Mammary epithelial cell (primary cell): ENCODE measurements at regions of chr2 and their contacts with region 1.

Region 1: GRCh38 chr2:158753641-158754611 is 41.2 kb upstream of the DAPL1 start:
- DNase-seq: peak; percentile 46
- H3K4me3 ChIP-seq: no peak overlapping the region
- H3K27ac ChIP-seq: no peak overlapping the region
- H3K4me1 ChIP-seq: peaks cover 14% of the 10 kb centered on the region
- H3K27me3 ChIP-seq: no peaks in the 10 kb centered on the region
- CTCF ChIP-seq: peak; percentile 85

Region 2: DNA sequence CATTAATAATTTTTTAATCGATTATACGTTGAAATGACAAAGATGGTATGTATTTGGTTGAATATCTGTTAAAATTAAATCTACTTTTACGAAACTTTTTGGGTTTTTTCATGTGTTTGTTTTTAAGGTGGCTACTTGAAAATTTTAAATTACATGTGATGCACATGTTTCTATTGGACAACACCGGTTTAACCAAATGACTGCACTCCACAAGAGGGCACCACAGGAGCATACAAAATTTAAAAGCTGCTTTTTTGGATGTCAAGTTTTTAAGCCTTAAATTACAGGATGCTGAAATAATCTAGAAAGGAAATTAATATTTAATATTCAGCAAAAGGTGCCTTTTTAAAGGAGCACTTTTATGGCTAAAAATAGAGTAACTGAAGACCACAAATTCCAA is 976.5 kb before region 1 on chr2:
- CTCF ChIA-PET with region 1: no interaction called
- dilution Hi-C with region 1: no loop called
- in situ Hi-C with region 1: loop called in 1 of 2 experiments (anchors 25 kb)
- intact Hi-C with region 1: loop called (anchors 5 kb)
- DNase-seq: peak; percentile 28
- H3K4me3 ChIP-seq: no peak overlapping the region
- H3K27ac ChIP-seq: no peak overlapping the region
- H3K4me1 ChIP-seq: no peaks in the 10 kb centered on the region
- H3K27me3 ChIP-seq: no peaks in the 10 kb centered on the region
- CTCF ChIP-seq: peak; percentile 60 to 66

Region 3: DNA sequence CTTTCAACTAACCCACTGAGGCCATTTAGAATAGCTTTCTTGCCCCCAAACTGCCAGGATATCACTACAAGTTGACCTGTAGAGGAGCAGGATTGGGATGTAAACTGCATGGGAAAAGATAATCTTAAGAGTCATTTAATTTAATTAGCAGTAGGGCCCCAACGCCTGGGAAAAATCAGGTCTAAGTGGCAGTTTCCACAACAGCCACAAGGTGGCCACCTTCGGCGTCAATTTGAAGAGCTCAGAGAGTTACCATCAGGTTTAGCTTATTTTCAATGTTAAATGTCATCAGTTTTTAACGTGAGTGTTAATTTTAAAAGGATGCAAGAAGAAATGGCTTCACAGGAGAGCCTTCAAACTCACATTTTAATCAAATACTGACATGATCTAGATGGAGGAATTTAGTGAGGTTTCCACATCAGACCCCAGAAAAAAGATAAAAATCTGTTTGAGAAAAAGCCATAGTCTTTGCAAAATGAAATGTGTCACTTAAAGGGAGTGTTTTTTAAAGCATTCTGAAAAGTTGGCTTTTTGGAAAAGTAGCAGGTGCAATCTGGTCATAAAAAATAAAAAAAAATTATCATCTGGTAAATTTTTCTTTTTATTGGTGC is 729.5 kb before region 1 on chr2:
- CTCF ChIA-PET with region 1: no interaction called
- dilution Hi-C with region 1: no loop called
- in situ Hi-C with region 1: no loop called
- intact Hi-C with region 1: loop called (anchors 1 kb)
- DNase-seq: peak; percentile 27
- H3K4me3 ChIP-seq: no peak overlapping the region
- H3K27ac ChIP-seq: no peak overlapping the region
- H3K4me1 ChIP-seq: peaks cover 7% of the 10 kb centered on the region
- H3K27me3 ChIP-seq: no peaks in the 10 kb centered on the region
- CTCF ChIP-seq: peak; percentile 79 to 96

Region 4: GRCh38 chr2:158034199-158034866 is 719.6 kb before region 1 on chr2:
- CTCF ChIA-PET with region 1: no interaction called
- dilution Hi-C with region 1: no loop called
- in situ Hi-C with region 1: loop called (anchors 5 to 10 kb)
- intact Hi-C with region 1: loop called (anchors 2 kb)
- DNase-seq: peak; percentile 43
- H3K4me3 ChIP-seq: no peak overlapping the region
- H3K27ac ChIP-seq: no peak overlapping the region
- H3K4me1 ChIP-seq: no peaks in the 10 kb centered on the region
- H3K27me3 ChIP-seq: peaks cover 3% of the 10 kb centered on the region
- CTCF ChIP-seq: peak; percentile 27 to 65

Region 5: DNA sequence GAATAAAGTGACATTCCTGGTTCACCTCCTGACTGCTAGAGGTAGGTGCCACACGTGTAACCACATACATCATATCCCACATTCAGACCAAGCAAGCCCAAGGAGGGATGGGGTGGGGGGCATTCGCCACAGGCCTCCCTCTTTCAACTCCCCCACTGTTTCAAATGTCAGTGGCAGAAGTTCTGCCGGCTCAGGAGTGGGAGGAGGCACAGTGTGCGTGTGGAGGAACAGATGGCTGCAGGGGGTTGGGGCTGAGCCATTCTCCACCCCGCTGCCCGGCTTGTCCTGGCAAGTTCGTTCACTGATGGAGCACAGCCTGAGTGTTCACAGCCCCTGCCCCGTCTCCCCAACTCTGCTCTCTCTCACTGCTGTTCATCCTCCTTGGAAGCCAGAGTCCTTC is 139.1 kb after region 1 on chr2:
- CTCF ChIA-PET with region 1: no interaction called
- dilution Hi-C with region 1: no loop called
- in situ Hi-C with region 1: no loop called
- intact Hi-C with region 1: loop called (anchors 5 kb)
- DNase-seq: peak; percentile 90
- H3K4me3 ChIP-seq: no peak overlapping the region
- H3K27ac ChIP-seq: peak overlapping the region; percentile 96
- H3K4me1 ChIP-seq: peaks cover 55% of the 10 kb centered on the region
- H3K27me3 ChIP-seq: no peaks in the 10 kb centered on the region
- CTCF ChIP-seq: no peak

Region 6: GRCh38 chr2:159118115-159118858 is 364.4 kb after region 1 on chr2:
- CTCF ChIA-PET with region 1: no interaction called
- dilution Hi-C with region 1: no loop called
- in situ Hi-C with region 1: no loop called
- intact Hi-C with region 1: loop called (anchors 10 kb)
- DNase-seq: peak; percentile 71
- H3K4me3 ChIP-seq: no peak overlapping the region
- H3K27ac ChIP-seq: no peak overlapping the region
- H3K4me1 ChIP-seq: peaks cover 7% of the 10 kb centered on the region
- H3K27me3 ChIP-seq: no peaks in the 10 kb centered on the region
- CTCF ChIP-seq: peak; percentile 92 to 96